CD14-positive monocyte (primary cell): ENCODE measurements at regions of chr7 and their contacts with region 1.

Region 1: GRCh38 chr7:107879400-107880035 is 11.5 kb upstream of the DLD start:
- DNase-seq: peak; percentile 40 to 72 (median 63)
- H3K4me3 ChIP-seq: no peak overlapping the region
- H3K4me3 Mint-ChIP-seq: no peak overlapping the region
- H3K27ac ChIP-seq: no peak overlapping the region
- H3K27ac Mint-ChIP-seq: no peak overlapping the region
- H3K4me1 ChIP-seq: peaks cover 18 to 24% of the 10 kb centered on the region in 2 donors
- H3K4me1 Mint-ChIP-seq: peaks cover 26% of the 10 kb centered on the region
- H3K27me3 ChIP-seq: peaks cover 3 to 4% of the 10 kb centered on the region in 2 donors
- H3K27me3 Mint-ChIP-seq: peaks cover 1 to 8% (median 4%) of the 10 kb centered on the region in 3 donors
- CTCF ChIP-seq: peak; percentile 84

Region 2: GRCh38 chr7:107201795-107202450 is 677.6 kb before region 1 on chr7:
- intact Hi-C with region 1: loop called in 1 of 2 experiments (anchors 10 kb)
- DNase-seq: no peak
- H3K4me3 ChIP-seq: no peak overlapping the region
- H3K4me3 Mint-ChIP-seq: no peak overlapping the region
- H3K27ac ChIP-seq: no peak overlapping the region
- H3K27ac Mint-ChIP-seq: no peak overlapping the region
- H3K4me1 ChIP-seq: no peaks in the 10 kb centered on the region
- H3K4me1 Mint-ChIP-seq: no peaks in the 10 kb centered on the region
- H3K27me3 ChIP-seq: no peaks in the 10 kb centered on the region
- H3K27me3 Mint-ChIP-seq: no peaks in the 10 kb centered on the region
- CTCF ChIP-seq: peak; percentile 32

Region 3: GRCh38 chr7:107450970-107451369 is 428.5 kb before region 1 on chr7:
- intact Hi-C with region 1: loop called in 1 of 2 experiments (anchors 10 kb)
- DNase-seq: no peak
- H3K4me3 ChIP-seq: no peak overlapping the region
- H3K4me3 Mint-ChIP-seq: no peak overlapping the region
- H3K27ac ChIP-seq: no peak overlapping the region
- H3K27ac Mint-ChIP-seq: no peak overlapping the region
- H3K4me1 ChIP-seq: no peaks in the 10 kb centered on the region
- H3K4me1 Mint-ChIP-seq: no peaks in the 10 kb centered on the region
- H3K27me3 ChIP-seq: no peaks in the 10 kb centered on the region
- H3K27me3 Mint-ChIP-seq: no peaks in the 10 kb centered on the region
- CTCF ChIP-seq: no peak

Region 4: GRCh38 chr7:107462740-107463444 is 416.6 kb before region 1 on chr7:
- intact Hi-C with region 1: loop called (anchors 10 kb)
- DNase-seq: peak; percentile 8 to 32 (median 23)
- H3K4me3 ChIP-seq: no peak overlapping the region
- H3K4me3 Mint-ChIP-seq: no peak overlapping the region
- H3K27ac ChIP-seq: no peak overlapping the region
- H3K27ac Mint-ChIP-seq: no peak overlapping the region
- H3K4me1 ChIP-seq: no peaks in the 10 kb centered on the region
- H3K4me1 Mint-ChIP-seq: peaks cover 2% of the 10 kb centered on the region
- H3K27me3 ChIP-seq: no peaks in the 10 kb centered on the region
- H3K27me3 Mint-ChIP-seq: no peaks in the 10 kb centered on the region
- CTCF ChIP-seq: peak; percentile 46

Region 5: GRCh38 chr7:107939573-107940489 is 60.3 kb after region 1 on chr7:
- intact Hi-C with region 1: no loop called
- DNase-seq: no peak
- H3K4me3 ChIP-seq: no peak overlapping the region
- H3K4me3 Mint-ChIP-seq: no peak overlapping the region
- H3K27ac ChIP-seq: no peak overlapping the region
- H3K27ac Mint-ChIP-seq: no peak overlapping the region
- H3K4me1 ChIP-seq: no peaks in the 10 kb centered on the region
- H3K4me1 Mint-ChIP-seq: no peaks in the 10 kb centered on the region
- H3K27me3 ChIP-seq: no peaks in the 10 kb centered on the region
- H3K27me3 Mint-ChIP-seq: peaks cover 0 to 1% (median 0%) of the 10 kb centered on the region in 3 donors
- CTCF ChIP-seq: no peak